GM10248 (cell line): ENCODE measurements at regions of chr12 and their contacts with region 1.

Region 1: GRCh38 chr12:94207849-94208621 is 59.7 kb downstream of the PLXNC1 start:
- DNase-seq: peak; percentile 72
- CTCF ChIP-seq: no peak

Region 2: DNA sequence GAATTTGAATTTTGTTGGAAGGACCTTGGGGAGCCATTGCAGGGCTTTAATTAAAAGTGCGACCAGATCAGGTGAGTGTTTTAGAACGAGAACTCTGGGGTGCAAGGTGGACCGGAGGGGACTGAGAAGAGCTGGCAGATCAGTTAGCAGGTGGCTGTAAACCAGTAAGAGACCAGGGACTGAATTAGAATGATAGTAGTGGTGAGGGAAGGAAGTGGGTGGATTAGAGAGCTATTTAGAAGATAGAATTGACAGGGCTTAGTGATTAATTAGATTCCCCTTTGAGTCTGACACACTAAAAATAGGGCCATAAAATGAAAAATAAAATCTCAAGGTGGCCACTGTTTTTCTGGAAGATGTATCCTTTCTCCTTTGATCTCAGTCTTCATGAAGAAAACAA is 14.9 kb before region 1 on chr12:
- CTCF ChIA-PET with region 1: interaction called, 13 read pairs
- POLR2A ChIA-PET with region 1: interaction called, 4 read pairs
- DNase-seq: no peak
- CTCF ChIP-seq: no peak

Region 3: DNA sequence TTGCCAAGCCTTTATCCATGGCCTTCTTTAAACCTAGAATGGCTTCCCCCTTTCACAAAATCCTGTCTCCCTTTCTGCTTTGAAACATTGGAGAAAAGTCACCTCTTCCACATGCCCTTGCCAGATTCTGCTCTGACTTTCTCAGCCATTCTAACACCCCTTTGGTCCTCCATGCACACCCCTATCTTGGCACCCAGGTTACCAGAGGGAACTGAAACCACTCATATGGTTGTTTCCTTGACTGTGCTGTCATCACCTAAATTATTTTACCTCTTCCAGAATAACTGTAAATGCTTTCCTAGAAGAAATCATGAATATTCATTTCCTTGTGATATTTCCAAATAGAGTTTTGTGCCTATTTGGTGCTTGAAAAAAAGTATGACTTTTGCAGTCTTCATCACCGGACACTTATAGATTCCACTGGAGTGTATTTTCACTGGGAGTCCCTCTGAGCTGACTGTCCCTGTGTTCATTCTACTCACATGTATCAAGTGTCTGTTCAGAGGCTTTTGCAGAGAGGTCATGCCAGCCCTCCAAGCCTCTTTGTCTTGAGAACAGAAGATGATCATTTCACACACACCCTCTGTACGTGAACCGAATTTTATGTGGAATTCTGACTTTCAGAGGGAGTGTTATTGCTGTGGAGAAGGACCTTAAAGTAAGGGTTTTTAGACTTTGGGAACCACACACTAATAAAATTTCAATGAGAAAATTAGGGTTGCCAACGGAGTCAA is 14.5 kb after region 1 on chr12:
- CTCF ChIA-PET with region 1: interaction called, 10 read pairs
- POLR2A ChIA-PET with region 1: interaction called, 4 read pairs
- DNase-seq: no peak
- CTCF ChIP-seq: no peak